Aorta (tissue), 5 donors: ENCODE measurements at regions of chr15 and their contacts with region 1.

Region 1: GRCh38 chr15:55290528-55291057 is 980 bp upstream of the RAB27A start:
- DNase-seq: peak; percentile 91 to 96
- ATAC-seq: peak; percentile 96
- H3K4me3 ChIP-seq: peak overlapping the region; percentile 70 to 71
- H3K27ac ChIP-seq: peak overlapping the region in 1 of 2 donors; percentile 82
- H3K4me1 ChIP-seq: no peaks in the 10 kb centered on the region
- H3K27me3 ChIP-seq: no peaks in the 10 kb centered on the region

Region 2: DNA sequence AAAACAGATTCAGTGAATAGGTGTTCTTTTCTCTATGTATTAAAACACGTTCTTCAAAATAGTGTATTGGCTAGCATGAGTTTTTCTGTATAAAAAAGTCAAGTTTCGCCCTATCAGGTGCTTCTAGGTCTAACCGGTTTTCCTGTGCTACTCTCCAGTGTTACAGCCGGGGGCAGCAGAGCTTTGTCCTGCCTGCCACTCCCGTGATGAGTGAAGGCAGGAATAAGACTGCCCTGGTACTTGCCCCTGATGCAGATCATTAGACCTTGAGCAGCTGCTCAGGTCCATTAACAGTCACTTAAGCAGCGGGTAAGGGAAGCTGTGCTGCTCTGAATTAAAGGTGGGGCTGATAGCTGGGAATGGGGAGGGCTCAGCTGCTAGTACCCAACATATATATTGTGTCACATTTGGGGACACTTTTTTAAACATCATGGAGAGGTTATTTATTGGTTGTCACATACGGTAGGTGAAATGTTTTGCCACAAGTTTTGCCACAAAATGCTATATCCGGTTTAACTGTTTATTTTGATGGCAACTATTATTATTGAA is 1313.7 kb before region 1 on chr15:
- intact Hi-C with region 1: loop called in 1 of 2 experiments (anchors 10 kb)
- DNase-seq: peak; percentile 45 to 70
- ATAC-seq: peak; percentile 58
- H3K4me3 ChIP-seq: peak overlapping the region in 1 of 2 donors; percentile 79
- H3K27ac ChIP-seq: peak overlapping the region in 1 of 2 donors; percentile 7
- H3K4me1 ChIP-seq: no peaks in the 10 kb centered on the region
- H3K27me3 ChIP-seq: no peaks in the 10 kb centered on the region

Region 3: DNA sequence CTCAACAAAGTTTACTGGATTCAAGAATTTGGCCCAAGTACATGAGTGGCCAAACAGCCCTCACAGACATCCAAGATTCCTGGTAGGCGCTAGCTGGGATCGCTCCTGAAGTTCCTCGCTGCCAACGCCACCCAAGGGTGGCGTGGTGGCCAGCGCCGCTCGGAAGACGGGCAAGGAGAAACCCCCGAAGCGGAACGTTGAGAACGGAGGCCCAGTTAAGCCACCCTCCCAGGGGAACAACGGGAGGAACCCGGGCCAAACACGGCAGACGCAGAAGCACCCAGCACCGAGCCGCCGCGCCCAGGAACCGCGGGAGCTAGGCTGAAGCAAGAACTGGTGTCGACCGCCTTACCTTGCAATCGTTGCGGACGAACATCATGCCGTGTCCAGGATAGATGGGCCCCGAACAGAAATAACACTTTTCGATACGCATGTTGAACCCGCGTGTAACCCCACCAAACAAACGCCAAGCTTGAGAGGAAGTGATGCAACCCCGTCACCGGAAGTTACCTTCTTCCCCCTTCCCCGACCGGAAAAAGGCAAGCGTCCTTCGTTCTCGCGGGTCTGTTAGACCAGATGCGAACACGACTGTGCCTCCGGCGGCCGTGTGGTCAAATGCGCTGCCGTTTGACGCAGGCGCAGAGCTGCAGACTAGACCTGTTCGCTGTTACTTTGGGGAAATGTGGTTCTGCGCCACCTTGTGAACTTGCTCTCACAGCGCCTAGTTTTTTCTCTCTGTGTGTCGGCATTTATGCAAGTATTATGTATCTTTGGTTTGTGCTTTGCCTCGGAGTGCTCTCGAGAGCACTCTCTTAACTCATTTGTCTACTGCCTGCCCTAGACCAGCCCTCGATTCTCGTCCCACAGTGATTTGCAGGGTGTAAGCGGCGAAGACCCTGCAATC is 93.9 kb before region 1 on chr15 and contains the start of gene RSL24D1:
- intact Hi-C with region 1: loop called in 1 of 2 experiments (anchors 1 kb)
- DNase-seq: peak; percentile 98
- ATAC-seq: peak; percentile 99
- H3K4me3 ChIP-seq: peak within 1 kb of the TSS; percentile 94 to 97
- H3K27ac ChIP-seq: peak within 1 kb of the TSS; percentile 54 to 94
- H3K4me1 ChIP-seq: peaks cover 3 to 5% of the 10 kb centered on the region in 2 donors
- H3K27me3 ChIP-seq: no peaks in the 10 kb centered on the region
- total RNA-seq, gene RSL24D1: 64.9 to 66.4 TPM

Region 4: GRCh38 chr15:55221090-55222011 is 69.2 kb before region 1 on chr15:
- intact Hi-C with region 1: loop called (anchors 1 to 2 kb)
- DNase-seq: no peak
- ATAC-seq: peak; percentile 78
- H3K4me3 ChIP-seq: no peak overlapping the region
- H3K27ac ChIP-seq: peak overlapping the region; percentile 61 to 78
- H3K4me1 ChIP-seq: no peaks in the 10 kb centered on the region
- H3K27me3 ChIP-seq: no peaks in the 10 kb centered on the region

Region 5: DNA sequence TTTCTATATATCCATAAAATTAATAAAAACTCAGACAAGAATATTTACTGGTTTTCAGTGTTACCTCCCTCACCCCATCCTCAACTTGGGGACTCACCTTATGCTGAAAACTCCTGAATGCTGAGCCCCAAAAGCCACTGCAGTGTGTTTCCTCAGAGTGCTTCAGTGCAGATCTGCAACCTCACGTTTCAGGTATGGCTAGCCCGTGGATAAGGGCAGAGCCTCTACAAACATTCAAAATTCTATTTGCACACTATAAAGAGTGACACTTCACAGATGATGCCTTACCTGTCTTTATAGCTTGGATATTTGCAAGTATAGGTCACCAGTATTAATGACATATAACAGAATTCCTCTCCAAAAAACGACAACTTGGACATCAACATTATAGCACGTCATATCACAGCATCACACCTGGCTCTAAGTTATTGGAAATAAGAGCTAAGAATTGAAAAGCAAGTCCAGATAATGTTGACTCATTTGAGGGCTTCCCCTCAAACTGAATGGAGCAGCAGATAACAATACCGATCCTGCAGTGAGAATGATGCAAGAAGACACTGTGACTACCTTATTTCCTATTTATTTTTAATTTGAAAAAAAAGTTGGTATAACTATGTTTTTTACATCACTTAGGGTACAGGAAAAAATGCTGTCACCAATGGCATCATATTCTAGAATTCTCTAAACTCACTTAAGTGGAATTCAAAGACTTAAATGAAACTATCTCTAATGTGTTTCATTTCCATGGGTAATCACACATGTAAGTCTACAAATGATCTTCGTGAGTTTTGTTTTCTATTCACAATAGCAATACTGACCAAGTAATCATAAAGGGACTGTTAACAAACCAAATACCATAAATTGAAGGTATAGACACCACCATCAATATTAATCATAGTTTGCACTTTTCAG is 53.1 kb before region 1 on chr15:
- intact Hi-C with region 1: no loop called
- DNase-seq: no peak
- ATAC-seq: no peak
- H3K4me3 ChIP-seq: no peak overlapping the region
- H3K27ac ChIP-seq: no peak overlapping the region
- H3K4me1 ChIP-seq: no peaks in the 10 kb centered on the region
- H3K27me3 ChIP-seq: no peaks in the 10 kb centered on the region

Region 6: DNA sequence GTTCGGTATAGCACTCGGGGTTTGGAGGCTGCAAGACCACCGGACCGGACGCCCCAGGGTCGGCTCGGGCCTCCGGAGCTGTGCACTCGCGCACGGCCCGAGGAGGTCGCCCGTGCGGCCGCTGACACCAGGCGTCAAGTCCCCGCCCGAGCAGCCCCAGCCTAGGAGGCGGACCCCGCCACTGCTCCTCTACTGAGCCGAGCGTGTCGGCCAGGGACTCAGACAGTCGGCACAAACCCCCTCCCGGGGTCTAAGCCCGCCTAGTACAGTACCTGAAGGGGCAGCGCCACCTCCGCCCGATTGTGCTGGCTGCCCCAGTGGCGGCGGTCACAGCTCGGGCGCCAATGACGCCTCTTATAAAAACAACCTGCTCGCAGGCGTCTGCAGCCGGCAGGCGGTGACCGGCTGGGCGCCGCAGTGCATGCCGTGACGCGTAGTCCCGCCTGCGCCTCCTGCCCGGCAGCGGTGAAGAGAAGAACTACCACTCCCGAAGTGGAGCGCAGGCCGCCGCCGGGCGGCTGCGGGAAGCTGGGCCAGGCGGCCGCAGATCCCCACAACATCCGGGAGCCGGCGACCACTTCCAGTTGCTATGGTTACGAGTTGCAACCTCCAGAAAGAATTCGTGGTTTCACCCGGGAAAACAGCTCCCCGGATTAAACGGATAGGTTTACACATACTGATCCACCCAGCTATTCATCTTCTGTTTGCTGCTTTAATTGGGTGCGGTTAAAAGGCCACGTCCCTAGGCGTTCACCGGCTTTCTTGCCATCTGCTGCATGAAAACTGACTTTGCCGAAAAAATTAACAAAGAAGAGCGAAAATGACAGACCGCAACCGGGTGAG is 117.6 kb after region 1 on chr15 and contains the starts of genes CCPG1 and PIERCE2:
- intact Hi-C with region 1: no loop called
- DNase-seq: peak; percentile 96
- ATAC-seq: peak; percentile 100
- H3K4me3 ChIP-seq: peak within 1 kb of the TSS; percentile 65 to 70
- H3K27ac ChIP-seq: peak within 1 kb of the TSS in 1 of 2 donors; percentile 56
- H3K4me1 ChIP-seq: peaks cover 0 to 3% of the 10 kb centered on the region in 2 donors
- H3K27me3 ChIP-seq: no peaks in the 10 kb centered on the region
- total RNA-seq, gene CCPG1: 108 to 126 TPM
- total RNA-seq, gene PIERCE2: 0.75 to 2.7 TPM

Region 7: DNA sequence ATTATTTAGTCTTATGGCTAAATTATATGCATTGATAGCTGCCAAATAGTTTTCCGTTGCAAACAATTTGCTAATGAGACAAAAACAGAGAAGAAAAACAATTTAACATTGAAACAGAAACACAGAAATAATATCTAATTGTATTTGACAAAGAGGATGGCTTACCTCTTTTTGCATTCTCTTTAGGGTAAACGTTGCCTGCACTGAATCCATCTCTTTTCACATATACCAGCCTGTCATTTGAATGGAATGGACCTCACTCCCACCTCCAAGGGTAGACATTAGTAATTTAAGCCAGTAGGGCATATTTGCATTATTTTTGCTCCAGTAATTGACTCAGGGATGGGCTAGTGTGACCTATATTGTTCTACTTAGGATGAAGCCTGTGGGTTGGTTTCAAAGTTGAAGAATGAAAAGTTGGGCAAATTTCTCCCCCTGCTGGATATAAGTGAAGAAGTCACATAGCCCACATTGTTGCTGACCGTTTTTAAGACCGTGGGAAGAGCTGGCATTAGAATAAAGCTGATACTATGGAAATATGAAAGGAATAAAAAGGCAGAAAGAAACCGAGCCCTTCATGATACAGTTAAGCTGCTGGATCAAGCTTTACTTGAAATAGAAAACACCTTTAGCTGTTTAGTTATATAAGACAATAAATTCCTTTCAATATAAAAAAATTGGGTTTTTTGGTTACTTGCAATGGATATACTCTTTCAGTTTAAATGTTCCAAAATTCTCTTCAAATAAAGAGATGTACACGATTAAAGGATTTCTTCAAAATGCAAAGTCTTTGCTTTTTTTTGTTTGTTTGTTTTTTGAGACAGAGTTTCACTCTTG is 144.6 kb after region 1 on chr15:
- intact Hi-C with region 1: loop called in 1 of 2 experiments (anchors 10 kb)
- DNase-seq: no peak
- ATAC-seq: peak; percentile 63
- H3K4me3 ChIP-seq: no peak overlapping the region
- H3K27ac ChIP-seq: no peak overlapping the region
- H3K4me1 ChIP-seq: no peaks in the 10 kb centered on the region
- H3K27me3 ChIP-seq: no peaks in the 10 kb centered on the region